ENCODE measurements at regions of chr15 and their contacts with region 1.

Region 1: DNA sequence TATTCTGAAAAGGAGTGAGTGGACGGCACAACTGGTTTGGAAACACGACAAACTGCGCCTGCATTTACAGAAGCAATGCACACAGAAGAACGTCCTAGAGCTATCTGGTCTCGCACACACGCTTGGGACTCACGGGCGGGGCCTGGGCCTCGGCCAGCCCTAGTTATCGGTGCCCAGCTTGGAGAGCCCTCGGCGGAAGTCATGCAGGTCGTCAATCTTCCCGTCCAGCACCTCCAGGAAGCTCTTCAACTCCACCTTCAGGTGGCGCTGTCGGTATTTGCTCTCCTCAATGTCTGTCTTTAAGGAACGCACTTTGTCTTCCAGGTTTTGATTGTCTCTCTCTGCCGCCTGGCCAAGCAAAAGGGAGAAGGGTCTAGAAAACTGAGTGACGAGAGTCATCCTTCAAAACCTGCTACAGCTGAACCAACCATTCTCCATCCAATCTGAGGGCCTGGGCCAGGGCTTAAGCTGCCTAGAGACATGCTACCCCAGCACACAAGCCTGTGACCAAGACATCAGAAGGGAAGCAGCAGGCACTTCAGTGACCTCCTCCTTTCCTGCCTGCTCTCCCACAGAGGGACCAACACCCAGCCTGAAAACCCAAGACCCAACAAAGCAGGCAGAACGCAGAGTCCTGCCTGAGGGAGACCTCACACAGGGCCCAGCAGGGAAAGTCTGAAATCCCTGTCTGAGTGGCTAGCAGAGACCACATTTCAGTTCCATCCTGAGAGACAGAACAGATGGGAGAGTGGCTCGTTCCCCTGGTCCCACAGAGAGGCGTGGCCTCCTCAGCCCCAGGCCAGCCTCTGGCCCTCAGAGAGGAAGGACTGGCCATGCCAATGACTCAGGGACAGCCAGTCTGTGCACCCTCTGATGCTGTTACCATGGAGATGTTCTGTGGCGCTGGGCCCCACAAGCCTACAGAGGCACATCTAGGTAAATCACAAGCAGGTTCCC is 40.4 kb downstream of the WHAMM start:
- DNase-seq: peak; percentile 87 to 95 (median 93)
- H3K4me3 ChIP-seq: no peak overlapping the region
- H3K27ac ChIP-seq: peak overlapping the region; percentile 22 to 87 (median 65)
- H3K4me1 ChIP-seq: peaks cover 2 to 20% of the 10 kb centered on the region in 2 donors
- H3K27me3 ChIP-seq: no peaks in the 10 kb centered on the region
- CTCF ChIP-seq: peak; percentile 68 to 91 (median 86)
- POLR2A ChIP-seq: peak in 1 of 2 donors; percentile 21

Region 2: GRCh38 chr15:82979726-82980125 is 129.9 kb after region 1 on chr15:
- intact Hi-C with region 1: loop called in 1 of 2 experiments (anchors 5 kb)
- DNase-seq: no peak
- H3K4me3 ChIP-seq: no peak overlapping the region
- H3K27ac ChIP-seq: no peak overlapping the region
- H3K4me1 ChIP-seq: peaks cover 0 to 2% of the 10 kb centered on the region in 2 donors
- H3K27me3 ChIP-seq: no peaks in the 10 kb centered on the region
- CTCF ChIP-seq: no peak
- POLR2A ChIP-seq: no peak